Mammary epithelial cell (primary cell): ENCODE measurements at regions of chr10 and their contacts with region 1.

Region 1: DNA sequence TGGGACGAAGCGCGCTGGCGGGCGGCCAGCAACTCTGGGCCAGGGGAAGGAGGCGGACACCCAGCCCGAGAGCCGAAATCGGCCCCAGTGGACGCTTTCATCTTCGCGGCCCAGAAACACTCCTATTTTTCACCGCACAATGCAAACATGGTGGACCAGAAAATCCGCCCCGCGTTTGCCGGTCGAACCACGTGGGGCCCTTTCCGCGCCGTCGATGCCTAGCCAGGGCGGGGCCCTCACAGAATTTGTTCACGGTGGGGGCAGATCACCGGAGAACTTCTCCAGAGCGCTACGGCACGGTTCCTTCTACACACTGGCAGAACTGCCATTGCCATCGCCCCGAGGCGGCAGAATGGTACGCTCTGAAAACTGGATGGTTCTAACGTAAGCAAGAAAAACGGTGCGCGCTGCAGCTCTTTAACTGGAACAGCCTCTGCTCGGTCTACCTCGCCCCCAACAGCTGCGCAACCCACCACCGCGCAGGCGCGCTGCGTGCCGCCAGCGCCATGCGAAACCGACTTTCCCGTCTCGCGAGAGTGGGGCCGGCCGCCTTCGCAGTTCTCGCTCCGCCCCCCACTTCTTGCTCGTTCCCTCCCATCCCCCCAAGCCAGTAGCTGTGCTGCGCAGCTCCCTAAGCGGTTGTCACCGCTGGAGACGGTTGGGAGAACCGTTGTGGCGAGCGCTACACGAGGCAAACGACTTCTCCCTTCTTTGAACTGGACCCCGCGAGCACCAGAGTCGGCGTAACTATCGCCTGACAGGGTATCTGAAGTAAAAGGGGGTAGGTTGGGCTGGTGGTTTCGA is at the start of gene HNRNPH3:
- DNase-seq: peak; percentile 95
- H3K4me3 ChIP-seq: peak within 1 kb of the TSS; percentile 63 to 97 (median 69)
- H3K27ac ChIP-seq: peak within 1 kb of the TSS; percentile 94
- H3K4me1 ChIP-seq: peaks cover 23% of the 10 kb centered on the region
- H3K27me3 ChIP-seq: no peaks in the 10 kb centered on the region
- CTCF ChIP-seq: no peak
- total RNA-seq, gene HNRNPH3: 10.0 to 122 TPM

Region 2: DNA sequence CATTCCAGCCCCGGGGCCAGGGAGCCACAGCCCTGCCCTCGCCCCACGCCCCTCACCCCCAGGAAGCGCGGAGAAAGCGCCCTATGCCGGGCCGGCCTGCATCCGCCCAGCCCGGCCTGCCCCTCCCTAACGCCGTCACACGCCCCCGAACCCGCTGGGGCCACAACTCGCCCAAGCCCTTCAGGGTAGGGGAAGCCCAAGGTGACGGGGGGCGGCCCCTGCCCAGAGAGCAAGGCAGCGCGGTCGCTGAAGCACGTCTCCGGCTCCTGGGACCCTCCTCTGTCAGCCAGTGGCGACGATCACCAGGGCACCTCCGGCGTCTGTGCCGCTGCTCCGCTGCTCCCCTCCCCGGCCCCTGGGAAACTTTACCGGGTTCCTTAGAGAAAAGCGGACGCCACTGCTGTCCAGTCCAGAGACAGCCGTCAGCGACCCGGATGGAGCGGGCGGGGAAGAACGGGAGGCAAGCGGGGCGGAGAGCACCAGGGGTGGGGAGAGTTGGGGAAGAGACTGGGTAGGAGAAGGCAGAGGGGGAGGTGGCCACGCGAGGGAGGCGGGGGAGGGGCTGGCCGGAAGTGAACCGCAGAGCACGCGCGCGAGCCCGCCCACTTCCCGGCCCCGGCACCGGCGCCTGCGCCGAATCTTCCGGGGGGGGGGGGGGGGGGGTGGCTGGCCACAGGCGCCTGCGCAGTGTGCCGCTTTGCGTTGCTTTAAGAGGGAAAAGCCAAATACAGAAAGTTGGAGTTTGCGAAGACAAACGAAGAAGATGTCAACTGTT is 256.7 kb before region 1 on chr10 and contains the start of gene HERC4:
- CTCF ChIA-PET with region 1: no interaction called
- dilution Hi-C with region 1: loop called (anchors 25 kb)
- in situ Hi-C with region 1: no loop called
- intact Hi-C with region 1: no loop called
- DNase-seq: peak; percentile 92
- H3K4me3 ChIP-seq: peak within 1 kb of the TSS; percentile 89 to 99 (median 99)
- H3K27ac ChIP-seq: peak within 1 kb of the TSS; percentile 90
- H3K4me1 ChIP-seq: peaks cover 10% of the 10 kb centered on the region
- H3K27me3 ChIP-seq: no peaks in the 10 kb centered on the region
- CTCF ChIP-seq: no peak
- total RNA-seq, gene HERC4: 79.4 to 88.7 TPM

Region 3: GRCh38 chr10:68082872-68083271 is 248.8 kb before region 1 on chr10:
- CTCF ChIA-PET with region 1: no interaction called
- dilution Hi-C with region 1: no loop called
- in situ Hi-C with region 1: no loop called
- intact Hi-C with region 1: loop called (anchors 2 kb)
- DNase-seq: no peak
- H3K4me3 ChIP-seq: no peak overlapping the region
- H3K27ac ChIP-seq: no peak overlapping the region
- H3K4me1 ChIP-seq: peaks cover 29% of the 10 kb centered on the region
- H3K27me3 ChIP-seq: no peaks in the 10 kb centered on the region
- CTCF ChIP-seq: peak; percentile 56 to 64

Region 4: DNA sequence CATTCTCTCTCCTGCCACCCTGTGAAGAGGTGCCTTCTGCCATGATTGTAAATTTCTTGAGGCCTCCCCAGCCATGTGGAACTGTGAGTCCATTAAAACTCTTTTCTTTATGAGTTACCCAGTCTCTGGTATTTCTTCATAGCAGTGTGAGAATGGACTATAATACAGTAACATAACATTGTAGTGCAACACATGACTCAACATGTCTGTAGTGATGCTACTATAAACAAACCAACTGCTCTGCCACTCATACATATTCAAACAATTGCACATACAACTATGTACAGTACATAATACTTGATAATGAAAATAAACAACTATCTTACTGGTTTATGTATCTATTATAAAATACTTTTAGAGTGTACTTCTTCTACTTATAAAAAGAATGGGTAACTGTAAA is 106.8 kb before region 1 on chr10:
- CTCF ChIA-PET with region 1: interaction called, 11 read pairs
- dilution Hi-C with region 1: no loop called
- in situ Hi-C with region 1: no loop called
- intact Hi-C with region 1: no loop called
- DNase-seq: peak; percentile 69
- H3K4me3 ChIP-seq: no peak overlapping the region
- H3K27ac ChIP-seq: peak overlapping the region; percentile 15
- H3K4me1 ChIP-seq: peaks cover 10% of the 10 kb centered on the region
- H3K27me3 ChIP-seq: no peaks in the 10 kb centered on the region
- CTCF ChIP-seq: no peak

Region 5: GRCh38 chr10:68284062-68285001 is 47.3 kb before region 1 on chr10:
- CTCF ChIA-PET with region 1: no interaction called
- dilution Hi-C with region 1: no loop called
- in situ Hi-C with region 1: no loop called
- intact Hi-C with region 1: no loop called
- DNase-seq: no peak
- H3K4me3 ChIP-seq: no peak overlapping the region
- H3K27ac ChIP-seq: no peak overlapping the region
- H3K4me1 ChIP-seq: no peaks in the 10 kb centered on the region
- H3K27me3 ChIP-seq: no peaks in the 10 kb centered on the region
- CTCF ChIP-seq: no peak

Region 6: GRCh38 chr10:69769395-69769992 is 1437.8 kb after region 1 on chr10:
- CTCF ChIA-PET with region 1: no interaction called
- dilution Hi-C with region 1: no loop called
- in situ Hi-C with region 1: no loop called
- intact Hi-C with region 1: no loop called
- DNase-seq: peak; percentile 59
- H3K4me3 ChIP-seq: no peak overlapping the region
- H3K27ac ChIP-seq: no peak overlapping the region
- H3K4me1 ChIP-seq: peaks cover 10% of the 10 kb centered on the region
- H3K27me3 ChIP-seq: no peaks in the 10 kb centered on the region
- CTCF ChIP-seq: no peak